Heart left ventricle (tissue), 16 donors: ENCODE measurements at regions of chr1 and their contacts with region 1.

Region 1: GRCh38 chr1:117886101-117886795 is 43.2 kb downstream of the GDAP2 start:
- DNase-seq: no peak
- ATAC-seq: no peak
- H3K4me3 ChIP-seq: no peak overlapping the region
- H3K27ac ChIP-seq: no peak overlapping the region
- H3K4me1 ChIP-seq: no peaks in the 10 kb centered on the region
- H3K27me3 ChIP-seq: no peaks in the 10 kb centered on the region
- CTCF ChIP-seq: no peak
- POLR2A ChIP-seq: no peak

Region 2: DNA sequence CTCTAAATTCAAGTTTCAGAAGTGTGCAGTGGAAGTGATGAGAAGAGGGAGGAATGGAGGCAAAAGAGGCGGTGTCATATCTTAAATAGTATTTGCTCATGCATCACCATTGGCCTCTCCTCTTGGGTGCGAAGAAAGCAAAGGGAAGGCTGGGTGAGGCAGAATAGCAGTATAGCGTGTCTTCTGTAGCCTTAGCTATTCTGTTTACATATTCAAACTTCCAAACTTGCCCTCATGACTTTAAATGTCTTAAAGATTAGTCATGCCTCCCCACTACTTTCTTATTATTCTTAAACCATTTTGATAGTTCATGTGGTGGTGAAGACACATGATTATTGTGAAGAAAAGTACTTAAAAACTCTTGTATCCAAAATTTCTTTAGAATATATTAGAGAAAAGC is 385.0 kb before region 1 on chr1:
- intact Hi-C with region 1: loop called in 1 of 10 experiments (anchors 10 kb)
- DNase-seq: no peak
- ATAC-seq: no peak
- H3K4me3 ChIP-seq: no peak overlapping the region
- H3K27ac ChIP-seq: no peak overlapping the region
- H3K4me1 ChIP-seq: no peaks in the 10 kb centered on the region
- H3K27me3 ChIP-seq: no peaks in the 10 kb centered on the region
- CTCF ChIP-seq: no peak
- POLR2A ChIP-seq: no peak

Region 3: GRCh38 chr1:117919376-117919775 is 33.1 kb after region 1 on chr1:
- intact Hi-C with region 1: no loop called
- DNase-seq: no peak
- ATAC-seq: no peak
- H3K4me3 ChIP-seq: no peak overlapping the region
- H3K27ac ChIP-seq: no peak overlapping the region
- H3K4me1 ChIP-seq: no peaks in the 10 kb centered on the region
- H3K27me3 ChIP-seq: no peaks in the 10 kb centered on the region
- CTCF ChIP-seq: no peak
- POLR2A ChIP-seq: no peak